A549 (cell line): ENCODE measurements at regions of chr14 and their contacts with region 1.

Region 1: GRCh38 chr14:34722717-34723545 is 8.5 kb upstream of the CFL2 start:
- DNase-seq: peak; percentile 70 to 84
- ATAC-seq: peak; percentile 84 to 86
- H3K4me3 ChIP-seq: no peak overlapping the region
- H3K27ac ChIP-seq: peak overlapping the region; percentile 59 to 78
- H3K4me1 ChIP-seq: peaks cover 17% of the 10 kb centered on the region; the same call in 2 of the 3 replicates
- CTCF ChIP-seq: peak; percentile 83
- EP300 ChIP-seq: no peak
- POLR2A ChIP-seq: no peak
- RAD21 ChIP-seq: peak; percentile 80 to 82

Region 2: DNA sequence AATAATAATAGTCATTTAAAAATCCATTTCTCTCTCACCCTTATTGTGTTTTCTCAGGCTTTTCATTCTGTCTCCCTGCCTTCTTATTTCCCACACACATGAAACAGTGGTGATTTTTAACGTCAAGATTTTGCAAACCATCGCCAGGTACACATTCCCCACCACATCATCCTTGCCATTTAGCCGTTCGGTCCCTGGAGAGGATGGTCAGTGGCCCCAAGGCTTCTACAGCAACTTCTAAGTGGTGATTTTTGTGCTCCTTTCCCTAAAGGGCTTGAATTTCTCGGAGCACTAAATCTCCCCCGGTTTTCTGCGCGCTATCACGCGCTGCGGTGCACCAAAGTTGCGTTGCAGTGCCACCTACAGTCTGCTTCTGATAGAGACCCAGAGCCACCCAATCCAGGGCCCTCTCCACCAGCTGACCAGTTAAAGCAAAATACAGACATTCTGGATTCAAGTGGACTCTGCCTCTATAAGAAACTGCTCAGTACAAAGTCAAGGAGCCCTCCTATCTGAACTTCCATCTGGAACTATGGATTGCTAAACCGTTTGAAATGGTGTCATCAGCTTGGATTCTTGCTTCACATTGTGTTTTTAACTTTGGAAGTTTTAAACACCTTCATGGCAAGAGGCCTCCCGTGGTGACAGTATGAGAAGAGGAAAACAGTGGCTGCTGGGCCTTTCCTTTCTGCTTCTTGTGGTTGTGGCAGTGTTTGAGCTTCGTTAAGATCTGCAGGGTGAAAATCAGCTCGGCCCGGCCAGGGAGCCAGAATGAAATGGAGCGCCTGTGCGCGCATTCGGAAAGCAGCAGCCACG is 494.9 kb before region 1 on chr14:
- CTCF ChIA-PET with region 1: no interaction called
- POLR2A ChIA-PET with region 1: no interaction called
- DNase-seq: peak; percentile 49 to 75
- ATAC-seq: peak; percentile 98 to 99
- H3K4me3 ChIP-seq: no peak overlapping the region
- H3K27ac ChIP-seq: no peak overlapping the region
- H3K4me1 ChIP-seq: peaks cover 5% of the 10 kb centered on the region; the same call in 2 of the 3 replicates
- CTCF ChIP-seq: peak; percentile 81
- EP300 ChIP-seq: no peak
- POLR2A ChIP-seq: no peak
- RAD21 ChIP-seq: peak; percentile 88 to 90

Region 3: GRCh38 chr14:34668111-34668510 is 54.8 kb before region 1 on chr14:
- CTCF ChIA-PET with region 1: interaction called, 120 read pairs
- POLR2A ChIA-PET with region 1: no interaction called
- DNase-seq: no peak
- ATAC-seq: no peak
- H3K4me3 ChIP-seq: no peak overlapping the region
- H3K27ac ChIP-seq: peak overlapping the region in 1 of 2 experiments; percentile 17; a peak in 3 of 6 replicates
- H3K4me1 ChIP-seq: peaks cover 16% of the 10 kb centered on the region
- CTCF ChIP-seq: no peak
- EP300 ChIP-seq: no peak
- POLR2A ChIP-seq: no peak
- RAD21 ChIP-seq: no peak

Region 4: DNA sequence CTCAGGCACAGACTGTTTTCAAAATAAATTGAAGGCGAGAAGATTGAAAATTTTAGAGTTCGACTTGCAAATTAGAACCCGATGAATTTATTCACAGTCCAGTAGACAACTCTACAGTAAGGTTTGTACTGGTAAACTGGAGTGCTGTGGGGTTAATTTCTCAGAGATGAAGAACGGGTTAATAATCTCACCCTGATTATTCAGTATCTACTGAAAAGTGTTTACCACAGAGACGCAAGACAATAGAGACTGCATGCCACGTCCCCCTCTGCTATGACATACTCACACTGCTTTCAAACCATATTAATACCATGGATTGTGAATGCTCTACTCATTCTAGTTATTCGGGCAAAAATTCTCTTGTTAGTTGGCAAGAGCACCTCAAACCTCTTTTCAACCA is 44.6 kb before region 1 on chr14:
- CTCF ChIA-PET with region 1: interaction called, 120 read pairs
- POLR2A ChIA-PET with region 1: no interaction called
- DNase-seq: no peak
- ATAC-seq: peak in 1 of 2 experiments; percentile 44; a peak in 4 of 6 replicates
- H3K4me3 ChIP-seq: no peak overlapping the region
- H3K27ac ChIP-seq: peak overlapping the region; percentile 15 to 63; a peak in 5 of 6 replicates
- H3K4me1 ChIP-seq: peaks cover 24% of the 10 kb centered on the region
- CTCF ChIP-seq: no peak
- EP300 ChIP-seq: no peak
- POLR2A ChIP-seq: no peak
- RAD21 ChIP-seq: no peak

Region 5: DNA sequence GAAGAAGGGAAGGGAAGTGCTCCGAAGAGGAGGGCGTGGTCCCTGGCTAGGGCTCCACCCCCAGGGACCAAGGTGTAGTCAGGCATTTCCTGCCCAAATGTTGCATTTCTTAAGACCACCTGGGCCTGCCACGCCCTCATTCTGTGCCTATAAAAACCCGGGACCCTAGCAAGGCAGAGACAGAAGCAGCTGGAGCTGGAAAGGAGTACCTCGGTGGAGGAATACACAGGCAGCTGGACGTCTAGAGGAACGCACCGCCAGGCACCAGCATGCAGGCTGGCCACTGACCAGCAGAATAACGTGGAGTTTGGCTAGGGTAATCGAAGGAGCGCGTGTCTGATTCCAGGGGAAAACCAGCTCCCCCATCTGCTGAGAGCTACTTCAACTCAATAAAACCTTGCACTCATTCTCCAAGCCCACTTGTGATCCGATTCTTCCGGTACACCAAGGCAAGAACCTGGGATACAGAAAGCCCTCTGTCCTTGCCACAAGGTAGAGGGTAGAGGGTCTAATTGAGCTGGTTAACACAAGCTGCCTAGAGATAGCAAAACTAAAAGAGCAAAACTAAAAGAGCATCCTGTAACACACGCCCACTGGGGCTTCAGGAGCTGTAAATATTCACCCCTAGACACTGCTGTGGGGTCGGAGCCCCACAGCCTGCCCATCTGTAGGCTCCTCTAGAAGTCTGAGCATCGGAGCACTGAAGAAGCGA is 29.5 kb before region 1 on chr14:
- CTCF ChIA-PET with region 1: interaction called, 12 read pairs
- POLR2A ChIA-PET with region 1: interaction called, 9 read pairs
- DNase-seq: peak; percentile 68 to 83
- ATAC-seq: peak; percentile 97 to 98
- H3K4me3 ChIP-seq: peak overlapping the region; percentile 53
- H3K27ac ChIP-seq: peak overlapping the region; percentile 82 to 88
- H3K4me1 ChIP-seq: peaks cover 11% of the 10 kb centered on the region; the same call in 2 of the 3 replicates
- CTCF ChIP-seq: no peak
- EP300 ChIP-seq: no peak
- POLR2A ChIP-seq: peak; percentile 87
- RAD21 ChIP-seq: no peak

Region 6: GRCh38 chr14:34699873-34700621 is 22.9 kb before region 1 on chr14:
- CTCF ChIA-PET with region 1: interaction called, 13 read pairs
- POLR2A ChIA-PET with region 1: interaction called, 3 read pairs
- DNase-seq: peak; percentile 65 to 90
- ATAC-seq: peak; percentile 93 to 97
- H3K4me3 ChIP-seq: peak overlapping the region; percentile 9; the same call in 1 of the 3 replicates
- H3K27ac ChIP-seq: peak overlapping the region; percentile 77 to 86
- H3K4me1 ChIP-seq: peaks cover 39% of the 10 kb centered on the region
- CTCF ChIP-seq: no peak
- EP300 ChIP-seq: peak in 1 of 2 experiments; percentile 76; a peak in 3 of 5 replicates
- POLR2A ChIP-seq: no peak
- RAD21 ChIP-seq: peak; percentile 5 to 26; a peak in 2 of 5 replicates

Region 7: GRCh38 chr14:34733235-34733634 is 10.3 kb after region 1 on chr14:
- CTCF ChIA-PET with region 1: interaction called, 34 read pairs
- POLR2A ChIA-PET with region 1: no interaction called
- DNase-seq: no peak
- ATAC-seq: peak in 1 of 2 experiments; percentile 62; a peak in 2 of 6 replicates
- H3K4me3 ChIP-seq: no peak overlapping the region
- H3K27ac ChIP-seq: peak overlapping the region in 1 of 2 experiments; percentile 20; a peak in 2 of 6 replicates
- H3K4me1 ChIP-seq: peaks cover 13% of the 10 kb centered on the region
- CTCF ChIP-seq: no peak
- EP300 ChIP-seq: no peak
- POLR2A ChIP-seq: no peak
- RAD21 ChIP-seq: no peak

Region 8: DNA sequence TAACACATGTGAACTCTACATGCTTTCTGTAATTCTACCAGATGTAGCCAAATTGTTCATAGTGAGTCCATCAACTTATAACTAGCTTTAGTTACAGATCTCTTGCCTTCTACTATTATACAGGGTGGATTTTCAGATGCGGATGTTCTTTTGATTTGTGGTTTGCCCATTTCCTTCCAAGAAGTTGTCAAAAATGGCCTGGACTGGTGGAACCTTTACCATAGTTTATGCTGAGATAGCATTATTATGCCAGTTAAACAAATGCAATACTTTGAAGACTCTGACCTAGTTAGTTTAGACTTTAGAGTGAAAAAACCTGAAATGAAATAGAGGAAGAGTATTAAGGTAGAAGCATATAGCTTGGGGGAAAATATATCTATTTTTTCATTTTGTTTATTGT is 18.9 kb after region 1 on chr14:
- CTCF ChIA-PET with region 1: interaction called, 11 read pairs
- POLR2A ChIA-PET with region 1: no interaction called
- DNase-seq: no peak
- ATAC-seq: no peak
- H3K4me3 ChIP-seq: no peak overlapping the region
- H3K27ac ChIP-seq: no peak overlapping the region
- H3K4me1 ChIP-seq: no peaks in the 10 kb centered on the region
- CTCF ChIP-seq: no peak
- EP300 ChIP-seq: no peak
- POLR2A ChIP-seq: no peak
- RAD21 ChIP-seq: no peak